ENCODE measurements at regions of chr17 and their contacts with region 1.

Region 1: DNA sequence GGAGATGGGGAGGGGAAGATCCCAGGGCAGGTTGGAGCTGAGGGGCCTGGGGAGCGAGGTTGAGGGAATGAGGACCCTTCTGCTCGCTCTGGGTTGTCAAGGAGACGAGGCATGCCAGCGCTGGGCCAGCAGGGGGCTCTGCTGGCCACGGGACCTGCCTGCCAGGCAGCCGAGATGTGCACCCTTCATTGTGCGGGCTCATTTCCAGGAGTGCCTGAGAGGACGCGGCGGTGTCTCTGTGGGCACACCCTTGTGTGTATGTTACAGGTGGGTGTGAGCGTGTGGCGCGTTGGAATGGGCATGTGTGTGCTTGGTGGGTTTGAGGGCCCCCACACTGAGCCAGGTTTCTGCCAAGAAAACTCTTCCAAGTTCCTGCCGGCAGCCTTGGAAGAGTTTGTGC is 15.9 kb downstream of the ARHGAP23 start:
- DNase-seq: peak; percentile 74
- H3K4me3 ChIP-seq: no peak overlapping the region
- H3K27ac ChIP-seq: no peak overlapping the region
- H3K4me1 ChIP-seq: peaks cover 24% of the 10 kb centered on the region
- CTCF ChIP-seq: peak; percentile 85

Region 2: DNA sequence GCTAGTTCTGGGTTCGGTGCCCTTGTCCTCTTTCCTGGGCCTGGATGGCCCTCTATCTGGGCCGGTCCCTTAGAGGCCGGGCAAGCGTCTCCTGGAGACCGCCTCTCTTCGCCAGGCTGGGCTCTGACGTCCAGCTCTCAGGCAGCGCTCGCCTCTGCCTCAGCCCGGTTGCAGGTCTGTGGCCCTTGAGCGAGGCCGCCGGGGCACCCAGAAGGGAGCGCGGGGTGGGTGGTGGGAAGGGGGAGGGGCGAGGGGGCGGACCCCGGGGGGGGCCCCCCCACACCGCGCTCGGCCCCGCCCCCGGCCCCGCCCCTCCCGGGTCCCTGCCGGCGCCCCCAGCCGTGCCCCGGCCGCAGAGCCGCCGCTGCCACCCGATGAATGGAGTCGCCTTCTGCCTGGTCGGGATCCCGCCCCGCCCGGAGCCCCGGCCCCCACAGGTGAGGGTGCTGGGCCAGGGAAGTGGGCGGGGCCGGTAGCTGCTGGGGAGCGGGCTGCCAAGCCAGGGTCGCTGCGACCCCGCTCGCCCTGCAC is 16.0 kb before region 1 on chr17 and contains the start of gene ARHGAP23:
- CTCF ChIA-PET with region 1: no interaction called
- POLR2A ChIA-PET with region 1: no interaction called
- intact Hi-C with region 1: loop called (anchors 1 kb)
- DNase-seq: peak; percentile 51
- H3K4me3 ChIP-seq: peak within 1 kb of the TSS; percentile 74
- H3K27ac ChIP-seq: peak within 1 kb of the TSS; percentile 31
- H3K4me1 ChIP-seq: peaks cover 27% of the 10 kb centered on the region
- CTCF ChIP-seq: no peak
- total RNA-seq, gene ARHGAP23: 18.6 and 25.4 TPM in 2 replicates

Region 3: DNA sequence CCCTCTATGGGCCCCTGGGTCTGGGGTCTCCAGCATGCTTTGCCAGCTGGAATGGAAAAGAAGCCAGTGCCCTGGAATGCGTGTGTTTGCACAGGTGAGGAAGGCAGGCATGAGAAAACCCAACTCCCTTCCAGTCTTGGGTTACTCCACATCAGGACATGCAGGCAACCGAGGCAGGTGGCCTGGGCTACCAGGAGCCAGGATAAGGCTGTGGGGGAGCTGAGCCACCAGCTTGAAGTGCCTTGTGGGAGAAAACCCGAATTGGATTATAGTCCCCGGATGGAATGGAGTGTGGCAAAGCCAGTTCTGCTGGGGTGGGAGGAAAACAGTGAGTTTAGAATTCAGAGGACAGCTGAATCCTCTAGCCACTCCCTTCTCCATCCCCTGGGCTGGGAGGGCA is 154.4 kb after region 1 on chr17:
- CTCF ChIA-PET with region 1: no interaction called
- POLR2A ChIA-PET with region 1: no interaction called
- intact Hi-C with region 1: no loop called
- DNase-seq: peak; percentile 88
- H3K4me3 ChIP-seq: no peak overlapping the region
- H3K27ac ChIP-seq: no peak overlapping the region
- H3K4me1 ChIP-seq: no peaks in the 10 kb centered on the region
- CTCF ChIP-seq: no peak